ENCODE measurements at regions of chr13 and their contacts with region 1.

Region 1: DNA sequence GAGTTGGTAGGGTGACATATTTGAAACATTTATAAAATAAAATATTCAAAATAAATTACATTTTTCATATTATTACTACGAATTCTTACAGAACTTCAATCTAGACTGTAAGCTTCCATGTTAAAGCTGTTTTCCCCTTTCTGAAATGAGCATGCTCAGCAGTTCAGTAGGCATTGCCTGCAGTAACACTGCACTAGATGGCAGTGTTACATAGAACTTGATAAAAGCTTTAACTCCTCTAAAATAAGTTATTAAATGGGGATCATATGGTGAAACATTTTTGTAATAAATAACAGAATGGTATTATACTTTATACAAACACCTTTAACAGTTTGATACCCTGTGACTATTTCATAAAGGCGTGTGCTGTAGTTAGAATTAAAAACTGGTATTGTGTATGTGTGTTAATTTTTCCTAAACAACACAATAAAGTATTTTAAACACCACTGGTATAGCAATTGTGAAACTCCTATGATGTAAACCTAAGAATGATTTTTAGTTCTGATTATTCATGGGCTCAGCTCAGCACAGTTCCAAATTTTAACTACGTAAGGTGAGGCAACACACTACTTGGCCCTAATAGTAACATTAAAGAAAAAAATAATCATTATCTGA is 11.6 kb upstream of the GPR18 start:
- DNase-seq: peak; percentile 78
- ATAC-seq: peak; percentile 94
- H3K4me3 ChIP-seq: no peak overlapping the region
- H3K27ac ChIP-seq: no peak overlapping the region
- H3K4me1 ChIP-seq: no peaks in the 10 kb centered on the region
- H3K27me3 ChIP-seq: no peaks in the 10 kb centered on the region
- CTCF ChIP-seq: peak; percentile 93
- POLR2A ChIP-seq: no peak
- RAD21 ChIP-seq: peak; percentile 89

Region 2: GRCh38 chr13:99087096-99087953 is 182.4 kb before region 1 on chr13:
- CTCF ChIA-PET with region 1: no interaction called
- POLR2A ChIA-PET with region 1: no interaction called
- dilution Hi-C with region 1: no loop called
- in situ Hi-C with region 1: no loop called
- intact Hi-C with region 1: loop called (anchors 10 kb)
- DNase-seq: peak; percentile 59
- ATAC-seq: peak; percentile 90
- H3K4me3 ChIP-seq: peak overlapping the region; percentile 71
- H3K27ac ChIP-seq: no peak overlapping the region; the same call in 1 of the 2 replicates
- H3K4me1 ChIP-seq: no peaks in the 10 kb centered on the region
- H3K27me3 ChIP-seq: peaks cover 12% of the 10 kb centered on the region; the same call in 1 of the 2 replicates
- CTCF ChIP-seq: 0 out of 2 replicates have a peak, but pooled peaks have one; percentile 4
- POLR2A ChIP-seq: no peak
- RAD21 ChIP-seq: no peak

Region 3: DNA sequence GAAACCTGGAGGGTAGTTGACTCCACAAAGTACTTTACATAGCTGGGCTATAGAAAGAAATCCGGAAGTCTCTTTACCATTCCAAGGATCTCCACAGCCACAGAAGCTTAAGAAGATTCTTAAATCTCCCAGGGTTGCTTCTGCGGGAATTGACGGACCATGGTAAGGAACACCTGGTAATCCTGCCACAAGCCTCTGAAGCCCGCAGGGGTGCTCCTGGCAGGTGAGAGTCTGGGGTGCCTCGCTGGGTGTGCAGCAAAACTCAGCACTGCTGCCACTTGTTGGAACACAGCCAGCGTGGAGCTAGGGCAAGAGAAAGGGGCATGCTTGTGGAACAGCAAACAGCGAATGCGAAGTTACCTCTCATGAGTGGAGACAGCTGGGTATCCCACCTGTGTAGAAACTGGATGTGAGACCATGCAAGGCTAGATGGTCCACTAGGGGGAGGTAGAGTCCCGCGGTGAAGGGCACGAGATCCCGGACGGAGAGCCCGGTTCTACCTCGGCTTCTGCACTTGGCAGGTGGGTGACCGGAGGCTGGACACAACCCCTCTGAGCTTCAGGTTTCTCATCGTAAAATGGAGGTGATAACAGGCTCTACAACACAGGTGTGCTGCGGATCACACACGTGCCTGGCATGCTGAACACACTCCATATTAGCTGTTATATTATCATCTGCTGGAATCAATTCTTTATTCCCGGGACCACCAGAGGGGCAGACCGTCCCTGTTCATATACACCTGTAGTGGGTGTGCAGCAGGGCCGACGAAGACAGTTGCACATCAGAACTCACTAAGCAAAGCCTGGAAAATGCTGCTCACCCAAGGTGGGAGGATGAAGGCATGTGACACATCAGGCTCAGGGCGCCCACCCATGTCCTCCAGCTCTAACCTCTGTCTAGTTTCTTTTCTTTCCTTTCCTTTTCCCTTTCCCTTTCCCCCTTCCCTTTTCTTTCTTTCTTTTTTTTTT is 93.1 kb before region 1 on chr13:
- CTCF ChIA-PET with region 1: interaction called, 13 read pairs
- POLR2A ChIA-PET with region 1: no interaction called
- dilution Hi-C with region 1: no loop called
- in situ Hi-C with region 1: loop called (anchors 5 kb)
- intact Hi-C with region 1: loop called (anchors 1 kb)
- DNase-seq: peak; percentile 43
- ATAC-seq: peak; percentile 97
- H3K4me3 ChIP-seq: no peak overlapping the region
- H3K27ac ChIP-seq: no peak overlapping the region
- H3K4me1 ChIP-seq: no peaks in the 10 kb centered on the region
- H3K27me3 ChIP-seq: peaks cover 35% of the 10 kb centered on the region
- CTCF ChIP-seq: peak; percentile 84
- POLR2A ChIP-seq: no peak
- RAD21 ChIP-seq: peak; percentile 92

Region 4: GRCh38 chr13:99436686-99437416 is 167.1 kb after region 1 on chr13:
- CTCF ChIA-PET with region 1: interaction called, 85 read pairs
- POLR2A ChIA-PET with region 1: interaction called, 3 read pairs
- dilution Hi-C with region 1: no loop called
- in situ Hi-C with region 1: loop called (anchors 5 kb)
- intact Hi-C with region 1: loop called (anchors 1 kb)
- DNase-seq: peak; percentile 83
- ATAC-seq: peak; percentile 90
- H3K4me3 ChIP-seq: no peak overlapping the region
- H3K27ac ChIP-seq: no peak overlapping the region
- H3K4me1 ChIP-seq: peaks cover 3% of the 10 kb centered on the region
- H3K27me3 ChIP-seq: peaks cover 20% of the 10 kb centered on the region
- CTCF ChIP-seq: peak; percentile 100
- POLR2A ChIP-seq: no peak
- RAD21 ChIP-seq: peak; percentile 88